ENCODE measurements at regions of chr2 and their contacts with region 1.

Region 1: DNA sequence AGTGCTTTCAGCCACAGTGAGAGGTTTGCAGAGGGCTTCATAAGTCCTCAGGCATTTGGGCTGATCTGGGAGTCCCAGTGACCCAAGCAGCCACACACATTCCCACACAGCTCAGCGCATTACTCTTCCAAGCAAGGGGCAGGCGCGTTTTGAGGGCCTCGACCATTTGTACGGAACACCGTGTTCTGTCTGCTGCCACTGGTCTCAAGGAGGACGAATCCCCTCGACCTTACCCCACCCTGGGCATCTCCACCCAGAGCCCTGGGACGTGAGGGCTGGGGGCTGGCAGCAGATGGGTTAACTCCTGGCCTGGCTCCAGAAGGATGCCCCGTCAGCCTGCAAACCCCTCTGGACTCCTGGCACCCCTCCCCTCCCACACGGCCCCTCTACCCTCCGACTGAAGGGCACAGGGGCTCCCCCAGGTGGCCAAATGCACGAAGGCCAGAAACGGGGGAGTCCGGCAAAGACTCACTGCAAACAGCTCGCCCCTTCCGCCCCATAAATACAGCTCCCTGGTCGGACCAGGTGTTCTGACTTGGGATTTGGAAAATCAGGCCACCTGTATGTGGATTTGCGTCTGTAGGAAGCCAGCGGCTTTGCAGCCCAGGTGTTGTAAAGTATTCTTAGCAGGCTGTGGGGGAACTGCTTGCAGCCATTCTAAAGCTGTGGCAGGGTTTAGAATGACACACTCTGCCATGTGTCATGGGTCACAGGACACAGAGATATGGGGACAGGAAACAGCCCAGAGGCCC is 33.6 kb upstream of the PTMA start:
- DNase-seq: peak; percentile 88
- ATAC-seq: peak; percentile 37
- H3K4me3 ChIP-seq: peak overlapping the region in 2 of 5 experiments; percentile 13 to 34
- H3K4me3 Mint-ChIP-seq: peak overlapping the region; percentile 91
- H3K27ac ChIP-seq: peak overlapping the region; percentile 98 to 100
- H3K27ac Mint-ChIP-seq: peak overlapping the region; percentile 100
- H3K4me1 ChIP-seq: peaks cover 64 to 79% of the 10 kb centered on the region in 2 donors
- H3K4me1 Mint-ChIP-seq: peaks cover 69% of the 10 kb centered on the region
- H3K27me3 ChIP-seq: no peaks in the 10 kb centered on the region
- H3K27me3 Mint-ChIP-seq: no peaks in the 10 kb centered on the region
- CTCF ChIP-seq: peak; percentile 84

Region 2: GRCh38 chr2:231028889-231029288 is 645.9 kb before region 1 on chr2:
- CTCF ChIA-PET with region 1: no interaction called
- POLR2A ChIA-PET with region 1: no interaction called
- intact Hi-C with region 1: no loop called
- DNase-seq: no peak
- ATAC-seq: no peak
- H3K4me3 ChIP-seq: no peak overlapping the region
- H3K4me3 Mint-ChIP-seq: no peak overlapping the region
- H3K27ac ChIP-seq: no peak overlapping the region
- H3K27ac Mint-ChIP-seq: no peak overlapping the region
- H3K4me1 ChIP-seq: no peaks in the 10 kb centered on the region
- H3K4me1 Mint-ChIP-seq: peaks cover 1% of the 10 kb centered on the region
- H3K27me3 ChIP-seq: peaks cover 0 to 8% (median 0%) of the 10 kb centered on the region in 4 experiments
- H3K27me3 Mint-ChIP-seq: peaks cover 10% of the 10 kb centered on the region
- CTCF ChIP-seq: no peak

Region 3: GRCh38 chr2:231394211-231395141 is 280.3 kb before region 1 on chr2:
- CTCF ChIA-PET with region 1: no interaction called
- POLR2A ChIA-PET with region 1: interaction called, 5 read pairs
- intact Hi-C with region 1: loop called (anchors 5 kb)
- DNase-seq: peak; percentile 88
- ATAC-seq: peak; percentile 40
- H3K4me3 ChIP-seq: peak overlapping the region; percentile 48 to 85 (median 66)
- H3K4me3 Mint-ChIP-seq: peak overlapping the region; percentile 99
- H3K27ac ChIP-seq: peak overlapping the region; percentile 97
- H3K27ac Mint-ChIP-seq: peak overlapping the region; percentile 100
- H3K4me1 ChIP-seq: peaks cover 47 to 65% of the 10 kb centered on the region in 2 donors
- H3K4me1 Mint-ChIP-seq: peaks cover 64% of the 10 kb centered on the region
- H3K27me3 ChIP-seq: no peaks in the 10 kb centered on the region
- H3K27me3 Mint-ChIP-seq: no peaks in the 10 kb centered on the region
- CTCF ChIP-seq: peak; percentile 60

Region 4: DNA sequence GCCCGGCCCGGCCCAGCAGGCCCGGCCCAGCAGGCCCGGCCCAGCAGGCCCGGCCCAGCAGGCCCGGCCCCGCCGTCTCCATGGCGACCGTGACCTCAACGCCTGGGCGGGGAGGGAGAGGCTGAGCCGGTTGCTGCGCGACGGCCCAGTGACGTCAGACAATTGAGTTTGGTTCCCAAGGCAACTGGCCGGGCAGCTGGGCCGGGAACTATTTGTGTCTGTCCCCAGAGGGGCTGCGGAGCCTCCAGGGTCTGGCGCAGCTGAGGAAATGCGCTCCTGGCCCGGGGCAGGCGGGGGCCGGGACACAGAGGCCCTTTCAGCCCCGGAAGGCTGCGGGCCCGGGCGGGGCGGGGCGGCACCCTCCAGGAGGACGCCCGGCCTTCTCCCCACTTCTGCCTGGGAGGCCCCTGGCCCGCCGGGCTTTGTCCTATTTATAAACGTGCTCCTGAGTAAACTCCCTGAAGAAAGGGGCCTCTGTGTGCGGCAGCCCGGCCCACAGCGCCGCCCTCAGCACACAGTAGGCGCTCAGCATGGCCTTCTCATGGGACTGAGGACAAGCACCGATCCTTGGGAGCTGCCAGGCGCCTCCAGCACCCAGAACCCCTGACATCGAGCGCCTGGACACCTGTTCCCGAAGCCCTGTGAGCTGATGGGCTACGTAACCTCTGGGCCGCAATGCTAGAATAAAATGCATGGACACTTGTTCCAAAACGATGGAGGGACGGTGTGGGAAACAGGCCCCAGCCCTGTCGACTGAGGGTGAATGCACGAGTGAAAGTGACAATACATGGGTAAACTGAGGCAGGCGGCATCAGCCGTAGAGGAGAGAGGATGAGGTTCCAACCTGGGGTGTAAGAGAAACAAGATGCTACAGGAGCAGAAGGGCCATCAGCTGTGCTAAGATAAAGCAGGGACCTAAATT is 69.8 kb before region 1 on chr2:
- CTCF ChIA-PET with region 1: interaction called, 561 read pairs
- POLR2A ChIA-PET with region 1: interaction called, 422 read pairs
- intact Hi-C with region 1: loop called (anchors 1 kb)
- DNase-seq: peak; percentile 100
- ATAC-seq: peak; percentile 88
- H3K4me3 ChIP-seq: peak overlapping the region in 4 of 5 experiments; percentile 55 to 65 (median 60)
- H3K4me3 Mint-ChIP-seq: peak overlapping the region; percentile 82
- H3K27ac ChIP-seq: peak overlapping the region; percentile 94
- H3K27ac Mint-ChIP-seq: peak overlapping the region; percentile 97
- H3K4me1 ChIP-seq: peaks cover 17 to 25% of the 10 kb centered on the region in 2 donors
- H3K4me1 Mint-ChIP-seq: peaks cover 31% of the 10 kb centered on the region
- H3K27me3 ChIP-seq: no peaks in the 10 kb centered on the region
- H3K27me3 Mint-ChIP-seq: no peaks in the 10 kb centered on the region
- CTCF ChIP-seq: no peak

Region 5: DNA sequence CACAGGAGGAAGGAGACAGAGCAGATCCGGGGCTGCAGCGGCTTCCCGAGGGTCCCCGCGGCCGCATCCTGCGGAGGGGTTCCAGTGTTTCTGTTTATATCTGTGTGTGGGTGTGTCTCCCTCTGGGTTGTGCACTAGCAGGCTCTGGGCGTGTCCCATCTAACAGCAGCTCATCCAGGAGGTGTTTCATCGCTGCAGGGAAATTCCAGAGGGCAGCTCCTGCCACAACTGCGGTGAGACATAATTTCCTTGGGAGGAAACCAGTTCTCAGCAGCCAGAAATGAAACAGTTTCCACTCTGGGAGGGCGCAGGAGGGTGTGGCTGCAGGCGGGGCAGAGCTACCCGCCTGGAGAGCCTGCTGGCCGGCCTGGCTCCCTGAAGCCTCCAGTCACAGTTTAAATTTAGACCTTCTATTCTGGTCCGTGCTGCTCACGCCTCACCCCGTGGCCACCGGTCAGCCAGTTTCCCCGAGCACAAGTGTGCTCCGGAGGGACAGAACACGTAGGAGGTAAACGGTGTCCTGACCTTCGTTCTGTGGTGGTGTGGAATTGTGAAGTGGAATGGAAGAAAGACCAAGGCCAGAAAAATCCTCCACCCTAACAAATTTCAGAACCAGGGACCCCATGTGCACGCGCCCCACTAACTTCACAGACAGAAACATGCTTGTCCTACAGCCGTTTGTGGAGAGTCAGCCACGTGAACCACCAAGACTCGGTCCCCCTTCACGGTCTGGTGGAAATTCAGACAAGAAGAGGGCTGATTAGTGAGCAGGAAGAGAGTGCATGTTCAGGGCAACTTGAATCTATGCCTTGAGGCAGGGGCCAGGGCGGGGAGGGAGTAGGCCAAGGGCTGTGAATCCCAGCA is 31.9 kb before region 1 on chr2:
- CTCF ChIA-PET with region 1: interaction called, 239 read pairs
- POLR2A ChIA-PET with region 1: interaction called, 26 read pairs
- intact Hi-C with region 1: loop called (anchors 1 kb)
- DNase-seq: peak; percentile 58
- ATAC-seq: peak; percentile 74
- H3K4me3 ChIP-seq: peak overlapping the region in 4 of 5 experiments; percentile 22 to 55 (median 42)
- H3K4me3 Mint-ChIP-seq: peak overlapping the region; percentile 83
- H3K27ac ChIP-seq: peak overlapping the region in 1 of 2 donors; percentile 45
- H3K27ac Mint-ChIP-seq: peak overlapping the region; percentile 83
- H3K4me1 ChIP-seq: peaks cover 14 to 20% of the 10 kb centered on the region in 2 donors
- H3K4me1 Mint-ChIP-seq: peaks cover 16% of the 10 kb centered on the region
- H3K27me3 ChIP-seq: no peaks in the 10 kb centered on the region
- H3K27me3 Mint-ChIP-seq: no peaks in the 10 kb centered on the region
- CTCF ChIP-seq: no peak

Region 6: DNA sequence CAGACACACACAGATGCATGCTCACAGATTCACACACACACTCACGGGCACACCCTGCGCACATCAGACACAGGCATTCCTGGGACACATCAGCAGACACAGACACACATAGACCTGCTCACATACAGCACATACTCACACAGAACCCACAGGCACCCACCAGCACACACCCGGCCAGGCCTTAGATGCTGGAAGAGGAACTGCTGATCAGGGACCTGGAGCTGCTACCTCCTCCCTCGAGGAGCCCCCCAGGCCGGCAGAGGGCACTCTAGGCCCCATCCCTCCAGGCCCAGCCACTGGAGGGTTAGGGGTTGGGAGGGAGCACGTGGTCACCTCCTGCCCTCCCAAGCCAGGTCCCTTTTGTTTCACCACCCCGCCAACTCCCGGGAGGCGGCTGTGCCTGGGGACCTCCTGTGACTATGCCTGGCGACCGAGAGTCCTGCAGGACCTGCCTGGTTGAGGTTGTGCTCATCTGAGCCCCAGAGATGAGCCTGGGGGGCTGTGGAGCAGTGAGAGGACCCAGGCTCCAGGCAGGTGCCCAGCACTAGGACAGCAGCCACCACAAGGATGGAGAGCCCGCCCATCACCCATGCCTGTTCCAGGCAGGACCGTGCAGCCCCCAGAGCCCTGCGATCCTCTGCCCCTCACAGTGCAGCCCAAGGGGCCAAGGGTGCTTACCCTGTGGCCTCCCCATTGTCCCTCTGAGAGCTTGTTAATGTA is 12.5 kb after region 1 on chr2:
- CTCF ChIA-PET with region 1: interaction called, 132 read pairs
- POLR2A ChIA-PET with region 1: interaction called, 24 read pairs
- intact Hi-C with region 1: loop called (anchors 1 kb)
- DNase-seq: peak; percentile 84
- ATAC-seq: peak; percentile 91
- H3K4me3 ChIP-seq: no peak overlapping the region
- H3K4me3 Mint-ChIP-seq: peak overlapping the region; percentile 14
- H3K27ac ChIP-seq: no peak overlapping the region
- H3K27ac Mint-ChIP-seq: peak overlapping the region; percentile 57
- H3K4me1 ChIP-seq: peaks cover 15 to 36% of the 10 kb centered on the region in 2 donors
- H3K4me1 Mint-ChIP-seq: peaks cover 38% of the 10 kb centered on the region
- H3K27me3 ChIP-seq: no peaks in the 10 kb centered on the region
- H3K27me3 Mint-ChIP-seq: no peaks in the 10 kb centered on the region
- CTCF ChIP-seq: peak; percentile 70

Region 7: GRCh38 chr2:231780909-231781797 is 106.4 kb after region 1 on chr2 and contains the start of gene PDE6D:
- CTCF ChIA-PET with region 1: interaction called, 9 read pairs
- POLR2A ChIA-PET with region 1: interaction called, 8 read pairs
- intact Hi-C with region 1: loop called (anchors 2 kb)
- DNase-seq: peak; percentile 98
- ATAC-seq: peak; percentile 89
- H3K4me3 ChIP-seq: peak within 1 kb of the TSS; percentile 72 to 92 (median 85)
- H3K4me3 Mint-ChIP-seq: peak within 1 kb of the TSS; percentile 100
- H3K27ac ChIP-seq: peak within 1 kb of the TSS; percentile 63 to 87
- H3K27ac Mint-ChIP-seq: peak within 1 kb of the TSS; percentile 97
- H3K4me1 ChIP-seq: peaks cover 28 to 32% of the 10 kb centered on the region in 2 donors
- H3K4me1 Mint-ChIP-seq: peaks cover 63% of the 10 kb centered on the region
- H3K27me3 ChIP-seq: no peaks in the 10 kb centered on the region
- H3K27me3 Mint-ChIP-seq: no peaks in the 10 kb centered on the region
- CTCF ChIP-seq: no peak
- total RNA-seq, gene PDE6D: 31.9 and 40.8 TPM in 2 replicates